Head of caudate nucleus (tissue), 42 donors: ENCODE measurements at regions of chr19 and their contacts with region 1.

Region 1: GRCh38 chr19:37906869-37907734 is at the start of gene SIPA1L3:
- DNase-seq: peak; percentile 93 to 99 (median 97)

Region 2: GRCh38 chr19:37790244-37790925 is 116.7 kb before region 1 on chr19:
- intact Hi-C with region 1: no loop called
- DNase-seq: no peak

Region 3: DNA sequence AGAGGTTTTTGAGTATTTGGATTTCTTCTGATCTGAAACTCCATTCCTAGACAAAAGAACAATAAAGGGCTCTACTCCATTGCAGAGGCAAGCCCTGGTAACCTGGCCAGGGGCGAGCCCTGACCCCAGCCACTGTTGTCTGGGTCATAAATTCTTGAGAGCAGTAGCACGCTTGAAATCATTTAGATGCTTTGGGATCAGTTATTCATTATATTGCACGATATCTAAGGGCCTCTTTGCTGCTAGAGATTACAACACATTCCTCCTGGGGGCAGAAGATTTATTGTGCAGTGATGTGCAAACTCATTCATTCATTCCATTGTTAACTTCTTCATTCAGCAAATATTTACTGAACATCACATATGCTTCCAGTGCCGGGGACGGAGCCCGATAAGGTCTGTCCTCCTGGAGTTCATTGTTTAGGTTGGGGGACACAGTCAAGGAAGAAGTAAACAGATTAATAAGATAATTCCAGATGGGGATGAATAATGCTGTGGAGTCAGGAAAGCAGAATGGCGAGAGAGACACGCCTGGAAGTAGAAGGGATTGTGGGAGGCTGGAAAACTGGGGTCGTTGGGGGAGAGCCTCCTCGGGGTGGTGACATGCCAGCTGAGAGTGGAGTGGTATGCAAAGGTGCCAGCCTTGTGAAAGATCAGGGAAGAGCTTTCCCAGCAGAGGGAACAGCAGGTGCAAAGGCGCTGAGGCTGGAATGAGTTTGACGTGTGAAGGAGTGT is 34.8 kb after region 1 on chr19:
- intact Hi-C with region 1: no loop called
- DNase-seq: no peak

Region 4: GRCh38 chr19:38095411-38096308 is 188.6 kb after region 1 on chr19:
- intact Hi-C with region 1: loop called (anchors 10 kb)
- DNase-seq: peak; percentile 51 to 90 (median 79)

Region 5: GRCh38 chr19:38229585-38230073 is 322.5 kb after region 1 on chr19:
- intact Hi-C with region 1: loop called (anchors 5 kb)
- DNase-seq: peak; percentile 88 to 99 (median 96)